ENCODE measurements at regions of chr2 and their contacts with region 1.

Region 1: DNA sequence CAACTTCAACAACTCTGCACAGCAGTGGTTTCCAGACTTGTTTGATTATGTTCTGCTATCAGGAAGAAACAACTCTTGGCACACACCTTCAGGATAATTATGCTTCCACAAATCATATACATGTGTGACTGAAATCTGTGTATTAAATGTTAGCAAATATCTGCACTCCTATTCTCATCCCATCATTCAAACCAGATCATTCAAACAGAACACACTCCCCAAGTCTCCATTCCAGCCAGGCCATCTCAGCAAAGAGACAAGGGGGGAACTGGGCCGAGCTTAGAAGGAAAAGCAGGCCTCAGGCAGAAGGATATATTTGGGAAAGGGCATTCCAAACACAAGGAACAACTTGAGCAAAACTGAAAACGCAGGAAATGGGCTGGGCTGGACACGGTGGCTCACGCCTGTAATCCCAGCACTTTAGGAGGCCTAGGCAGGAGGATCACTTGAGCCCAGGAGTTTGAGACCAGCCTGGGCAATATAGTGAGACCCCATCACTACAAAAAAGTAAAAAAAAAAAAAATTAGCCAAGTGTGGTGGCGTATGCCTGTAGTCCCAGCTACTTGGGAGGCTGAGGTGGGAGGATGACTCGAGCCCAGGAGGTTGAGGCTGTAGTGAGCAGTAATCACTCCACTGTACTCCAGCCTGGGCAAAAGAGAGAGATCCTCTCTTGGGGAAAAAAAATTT is 62.7 kb downstream of the ZFP36L2 start:
- DNase-seq: no peak
- ATAC-seq: no peak

Region 2: DNA sequence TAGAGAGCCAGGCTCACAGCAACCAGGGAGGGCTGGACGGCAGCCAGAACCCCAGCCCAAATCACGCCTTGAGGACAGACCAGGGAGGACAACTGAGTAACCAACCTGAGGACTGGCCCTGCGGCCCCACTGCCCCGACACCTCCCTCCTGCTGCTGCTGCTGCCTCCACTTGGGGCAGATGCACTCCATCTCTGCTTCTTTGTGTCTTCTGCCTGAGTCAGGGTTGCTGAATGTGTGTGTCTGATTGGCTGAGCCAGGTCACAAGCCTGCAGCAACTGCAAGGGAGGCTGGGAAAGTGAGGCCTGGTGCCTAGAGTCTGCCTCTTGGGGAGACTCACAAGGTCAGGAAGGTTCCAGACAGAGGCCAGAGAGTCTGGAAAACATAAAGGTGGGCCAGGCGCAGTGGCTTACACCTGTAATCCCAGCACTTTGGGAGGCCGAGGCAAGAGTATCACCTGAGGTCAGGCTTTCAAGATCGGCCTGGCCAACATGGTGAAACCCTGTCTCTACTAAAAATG is 20.7 kb before region 1 on chr2:
- intact Hi-C with region 1: loop called (anchors 1 kb)
- DNase-seq: no peak
- ATAC-seq: no peak

Measured in sciatic nerve (tissue), 2 donors.